OCI-LY7 (cell line): ENCODE measurements at regions of chr19 and their contacts with region 1.

Region 1: DNA sequence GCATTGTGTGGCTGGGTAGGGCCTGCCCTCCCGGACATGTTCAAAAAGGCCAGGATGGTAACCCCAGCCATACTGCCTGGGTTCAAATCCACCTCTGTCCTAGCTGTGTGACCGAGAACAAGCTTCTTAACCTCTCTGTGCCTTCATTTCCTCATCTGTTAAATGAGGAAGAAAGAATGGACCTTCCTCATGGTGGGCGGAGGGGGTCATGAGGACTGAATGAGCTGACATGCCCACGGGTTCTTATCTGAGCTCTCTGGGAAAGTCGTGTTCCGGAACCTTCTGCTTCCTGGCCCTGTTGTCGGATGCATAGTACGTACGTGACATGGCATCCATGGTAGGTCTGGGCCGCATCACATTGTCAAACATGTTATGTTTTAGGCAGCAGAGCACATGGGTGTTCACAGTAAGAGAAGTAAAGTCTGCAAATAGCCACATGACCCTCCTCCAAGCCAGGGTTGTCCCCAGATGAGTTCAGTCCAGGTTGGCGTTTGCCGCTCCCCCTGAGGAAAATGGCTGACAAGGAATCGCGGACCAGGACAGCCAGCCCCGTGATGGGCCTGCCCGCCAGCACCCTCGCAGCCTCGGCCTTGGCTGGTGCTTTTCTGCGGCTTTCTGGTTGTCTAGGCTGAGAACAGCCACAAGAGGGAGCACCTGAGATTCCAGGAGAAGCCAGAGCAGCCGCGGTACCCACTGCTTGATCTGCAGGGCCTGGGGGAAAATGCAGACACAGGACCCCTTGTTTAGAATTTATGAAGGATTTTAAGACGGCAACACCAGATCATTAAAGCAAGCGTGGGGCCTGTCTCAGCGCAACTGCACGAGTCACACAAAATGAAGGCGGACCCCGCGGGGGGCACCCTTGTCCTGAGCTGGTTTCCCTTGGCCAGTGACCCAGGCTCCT is 2.4 kb upstream of the NTN5 start:
- DNase-seq: peak; percentile 85
- H3K4me3 ChIP-seq: no peak overlapping the region
- H3K27ac ChIP-seq: no peak overlapping the region
- H3K4me1 ChIP-seq: peaks cover 2% of the 10 kb centered on the region
- CTCF ChIP-seq: peak; percentile 93

Region 2: GRCh38 chr19:48738557-48739399 is 63.6 kb after region 1 on chr19:
- CTCF ChIA-PET with region 1: no interaction called
- POLR2A ChIA-PET with region 1: no interaction called
- intact Hi-C with region 1: loop called (anchors 1 kb)
- DNase-seq: peak; percentile 87
- H3K4me3 ChIP-seq: no peak overlapping the region
- H3K27ac ChIP-seq: no peak overlapping the region
- H3K4me1 ChIP-seq: peaks cover 20% of the 10 kb centered on the region
- CTCF ChIP-seq: peak; percentile 53; the same call in 1 of the 2 replicates